ENCODE measurements at regions of chr4 and their contacts with region 1.

Region 1: DNA sequence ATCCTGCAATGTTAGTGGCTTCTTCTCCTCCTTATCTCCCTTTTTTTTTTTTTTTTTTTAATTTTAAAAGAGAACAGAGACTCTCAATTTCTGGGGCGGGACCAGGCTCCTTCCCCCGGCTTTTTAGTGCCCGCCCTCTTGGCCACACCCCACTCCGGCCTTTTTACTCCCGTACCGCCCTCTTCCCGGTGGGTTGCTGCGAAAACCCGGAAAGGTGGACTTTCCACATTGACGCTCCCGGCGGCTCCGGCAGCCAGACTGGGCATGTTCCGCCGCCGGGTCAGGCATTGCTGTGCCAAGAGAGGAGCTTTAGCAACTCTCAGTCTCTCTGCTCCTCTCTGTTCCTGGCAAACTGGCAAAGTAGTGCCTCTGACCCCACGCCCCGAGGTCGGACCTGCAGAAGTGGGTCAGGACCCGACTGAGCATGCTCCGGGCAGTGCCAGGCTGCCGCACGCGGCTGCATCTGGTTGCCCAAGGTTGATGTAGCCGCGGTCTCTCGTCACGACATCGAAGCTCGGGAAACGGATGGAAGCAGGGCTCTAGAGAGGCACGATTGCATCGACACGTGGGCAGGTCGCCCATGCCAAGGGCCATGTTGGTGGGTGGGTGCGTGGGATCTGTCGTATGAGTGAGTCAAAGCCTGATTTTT is 1.1 kb upstream of the MFAP3L start:
- DNase-seq: peak; percentile 90 to 97
- H3K4me3 ChIP-seq: peak overlapping the region; percentile 82 to 99
- H3K27ac ChIP-seq: peak overlapping the region; percentile 90
- H3K4me1 ChIP-seq: peaks cover 0 to 13% (median 2%) of the 10 kb centered on the region in 4 donors
- H3K27me3 ChIP-seq: no peaks in the 10 kb centered on the region
- CTCF ChIP-seq: no peak

Region 2: GRCh38 chr4:168621806-168622589 is 1405.3 kb before region 1 on chr4:
- intact Hi-C with region 1: no loop called
- DNase-seq: no peak
- H3K4me3 ChIP-seq: no peak overlapping the region
- H3K27ac ChIP-seq: peak overlapping the region in 1 of 2 donors; percentile 5
- H3K4me1 ChIP-seq: peaks cover 0 to 35% (median 23%) of the 10 kb centered on the region in 4 donors
- H3K27me3 ChIP-seq: no peaks in the 10 kb centered on the region
- CTCF ChIP-seq: no peak

Region 3: GRCh38 chr4:169968999-169969398 is 58.3 kb before region 1 on chr4:
- intact Hi-C with region 1: loop called (anchors 10 kb)
- DNase-seq: no peak
- H3K4me3 ChIP-seq: no peak overlapping the region
- H3K27ac ChIP-seq: peak overlapping the region in 1 of 2 donors; percentile 2
- H3K4me1 ChIP-seq: peaks cover 0 to 49% (median 10%) of the 10 kb centered on the region in 4 donors
- H3K27me3 ChIP-seq: no peaks in the 10 kb centered on the region
- CTCF ChIP-seq: no peak

Region 4: GRCh38 chr4:170047771-170048354 is 20.6 kb after region 1 on chr4:
- intact Hi-C with region 1: no loop called
- DNase-seq: peak in 1 of 2 donors; percentile 33
- H3K4me3 ChIP-seq: no peak overlapping the region
- H3K27ac ChIP-seq: no peak overlapping the region
- H3K4me1 ChIP-seq: no peaks in the 10 kb centered on the region
- H3K27me3 ChIP-seq: peaks cover 0 to 3% of the 10 kb centered on the region in 2 donors
- CTCF ChIP-seq: peak; percentile 72 to 85

Measured in tibial artery (tissue), 4 donors.